Naive thymus-derived CD8-positive, alpha-beta T cell (primary cell): ENCODE measurements at regions of chr14 and their contacts with region 1.

Region 1: GRCh38 chr14:91396959-91397815 is 20.4 kb downstream of the CCDC88C start:
- DNase-seq: peak; percentile 36 to 78 (median 58)
- ATAC-seq: peak; percentile 46 to 75
- H3K4me3 Mint-ChIP-seq: peak overlapping the region; percentile 72 to 99 (median 82)
- H3K27ac Mint-ChIP-seq: peak overlapping the region; percentile 79 to 99 (median 94)
- H3K4me1 Mint-ChIP-seq: peaks cover 57 to 99% (median 97%) of the 10 kb centered on the region in 4 donors
- H3K27me3 Mint-ChIP-seq: no peaks in the 10 kb centered on the region

Region 2: GRCh38 chr14:91323671-91324605 is 73.2 kb before region 1 on chr14:
- POLR2A ChIA-PET with region 1: interaction called, 30 read pairs
- DNase-seq: peak; percentile 88 to 96 (median 93)
- ATAC-seq: peak; percentile 77 to 85
- H3K4me3 Mint-ChIP-seq: peak overlapping the region; percentile 72 to 96 (median 83)
- H3K27ac Mint-ChIP-seq: peak overlapping the region; percentile 95 to 99 (median 98)
- H3K4me1 Mint-ChIP-seq: peaks cover 50 to 89% (median 86%) of the 10 kb centered on the region in 4 donors
- H3K27me3 Mint-ChIP-seq: no peaks in the 10 kb centered on the region

Region 3: GRCh38 chr14:91332151-91332985 is 64.8 kb before region 1 on chr14:
- POLR2A ChIA-PET with region 1: interaction called, 22 read pairs
- DNase-seq: no peak
- ATAC-seq: no peak
- H3K4me3 Mint-ChIP-seq: peak overlapping the region; percentile 10 to 80 (median 66)
- H3K27ac Mint-ChIP-seq: peak overlapping the region; percentile 84 to 99 (median 97)
- H3K4me1 Mint-ChIP-seq: peaks cover 57 to 84% (median 65%) of the 10 kb centered on the region in 4 donors
- H3K27me3 Mint-ChIP-seq: no peaks in the 10 kb centered on the region

Region 4: DNA sequence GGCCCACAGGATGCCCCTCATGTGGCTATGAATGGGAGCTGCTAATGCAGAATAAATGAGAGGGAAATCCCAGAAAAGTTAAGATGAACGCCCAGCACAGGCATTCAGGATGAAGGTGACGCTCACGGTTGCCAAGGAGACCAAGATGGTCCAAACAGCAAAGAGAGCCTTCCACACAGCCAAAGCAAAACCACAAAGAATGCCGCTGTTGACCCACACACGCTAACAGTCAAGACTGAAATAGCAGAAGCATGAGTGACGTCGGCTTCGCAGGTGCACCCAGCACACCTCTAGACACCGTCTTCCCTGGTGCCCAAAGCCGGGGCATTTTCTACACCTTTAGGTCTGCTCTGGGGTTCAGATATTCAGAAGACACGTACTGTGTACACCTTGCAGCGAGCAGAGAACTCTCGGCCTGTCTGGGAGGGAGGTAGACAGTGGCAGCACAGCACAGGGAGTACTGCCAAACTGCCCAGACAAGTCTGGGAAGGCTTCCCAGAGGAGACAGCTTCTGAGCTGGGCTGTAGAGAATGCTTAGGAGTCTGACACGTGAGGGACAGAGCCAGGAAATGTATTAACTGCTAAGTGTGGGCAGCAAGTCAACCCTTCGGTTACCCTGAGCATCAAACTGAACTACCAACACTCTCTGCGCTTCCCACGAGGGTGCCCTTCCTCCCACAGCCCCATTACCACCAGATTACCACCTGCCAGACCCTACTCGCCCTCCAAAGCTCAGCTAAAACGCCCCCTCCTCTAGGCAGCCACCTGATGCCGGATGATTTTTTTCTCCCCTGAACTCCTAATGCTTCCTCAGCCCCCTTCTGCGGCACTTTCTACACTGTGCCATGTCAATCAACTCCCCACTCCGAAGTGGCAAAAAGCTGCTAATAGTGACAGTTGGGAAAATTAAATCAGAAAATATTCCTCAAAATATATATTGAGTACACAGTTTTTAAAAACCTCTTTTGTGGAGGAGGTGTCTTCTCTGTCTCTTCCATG is 29.7 kb before region 1 on chr14:
- POLR2A ChIA-PET with region 1: interaction called, 179 read pairs
- DNase-seq: peak; percentile 51 to 85 (median 74)
- ATAC-seq: peak; percentile 74 to 85
- H3K4me3 Mint-ChIP-seq: peak overlapping the region; percentile 69 to 88 (median 81)
- H3K27ac Mint-ChIP-seq: peak overlapping the region; percentile 89 to 99 (median 94)
- H3K4me1 Mint-ChIP-seq: peaks cover 45 to 97% (median 91%) of the 10 kb centered on the region in 4 donors
- H3K27me3 Mint-ChIP-seq: no peaks in the 10 kb centered on the region

Region 5: DNA sequence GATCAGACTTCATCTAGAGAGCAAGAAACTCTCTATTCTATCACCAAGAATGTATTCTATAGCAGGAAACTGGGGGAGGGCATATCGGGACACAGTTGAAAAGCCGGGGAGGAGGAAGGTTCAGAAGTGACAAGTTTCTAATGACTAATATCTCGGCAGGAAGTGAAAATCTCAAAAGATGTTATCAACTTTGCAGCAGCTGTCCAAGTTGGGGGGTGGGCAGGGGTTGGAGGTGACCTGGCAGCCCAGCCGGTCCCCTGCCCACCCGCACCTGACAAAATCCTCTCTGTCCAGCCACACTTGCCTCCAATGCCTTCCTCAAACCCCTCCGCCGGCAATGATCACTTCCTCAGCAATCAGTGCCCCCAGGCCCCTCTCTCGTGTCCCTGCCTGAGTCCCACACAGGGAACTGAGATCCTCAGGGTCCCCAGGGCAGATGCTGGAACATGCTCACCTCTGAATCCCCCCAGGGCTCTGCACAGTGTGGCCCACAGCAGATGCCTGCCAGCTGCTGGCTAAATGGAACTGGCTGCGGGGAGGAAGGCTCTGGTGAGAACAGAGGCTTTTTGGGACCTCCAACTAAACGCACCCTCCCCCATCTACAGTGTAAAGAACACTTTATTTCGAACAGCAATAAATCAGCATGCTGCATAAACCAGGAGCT is 23.5 kb before region 1 on chr14:
- POLR2A ChIA-PET with region 1: interaction called, 179 read pairs
- DNase-seq: peak in 4 of 10 donors; percentile 45 to 57 (median 52)
- ATAC-seq: peak; percentile 33 to 51
- H3K4me3 Mint-ChIP-seq: peak overlapping the region; percentile 76 to 96 (median 85)
- H3K27ac Mint-ChIP-seq: peak overlapping the region; percentile 85 to 98 (median 94)
- H3K4me1 Mint-ChIP-seq: peaks cover 67 to 99% (median 99%) of the 10 kb centered on the region in 4 donors
- H3K27me3 Mint-ChIP-seq: no peaks in the 10 kb centered on the region

Region 6: DNA sequence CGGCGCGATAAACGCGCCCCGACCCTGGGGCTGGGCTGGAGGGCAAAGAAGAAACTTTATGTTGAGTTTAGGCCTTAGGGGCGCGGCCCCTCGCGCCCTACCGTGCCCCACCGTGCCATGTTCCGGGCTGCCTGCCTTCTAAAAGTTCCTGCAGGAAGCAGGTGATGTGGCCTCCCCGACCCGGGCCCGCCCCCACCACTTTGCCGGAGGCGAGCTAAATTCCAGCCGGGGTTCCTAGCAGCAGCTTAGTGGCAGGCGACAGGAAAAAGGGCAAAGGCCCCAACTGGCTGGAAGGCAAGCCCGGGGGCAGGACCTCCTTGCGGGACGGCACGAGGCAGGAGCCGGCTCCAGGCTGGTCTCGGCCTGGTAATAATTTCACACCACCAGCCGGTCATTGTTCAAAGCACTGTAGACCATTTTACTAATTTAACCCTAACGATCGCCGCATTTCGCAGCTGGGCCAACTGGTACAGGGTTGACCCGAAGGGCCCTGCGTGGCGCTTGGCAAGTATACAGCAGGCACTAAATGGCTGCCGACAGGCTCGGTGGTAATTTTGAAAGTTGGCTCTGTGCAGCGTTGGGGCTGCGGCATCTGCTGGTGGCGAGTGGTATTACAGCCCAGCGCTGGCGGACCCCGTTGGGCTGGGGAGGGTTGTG is 21.3 kb after region 1 on chr14:
- POLR2A ChIA-PET with region 1: interaction called, 643 read pairs
- DNase-seq: peak in 9 of 10 donors; percentile 65 to 88 (median 79)
- ATAC-seq: peak; percentile 11 to 23
- H3K4me3 Mint-ChIP-seq: peak overlapping the region; percentile 78 to 98 (median 86)
- H3K27ac Mint-ChIP-seq: peak overlapping the region; percentile 84 to 98 (median 93)
- H3K4me1 Mint-ChIP-seq: peaks cover 19 to 56% (median 39%) of the 10 kb centered on the region in 4 donors
- H3K27me3 Mint-ChIP-seq: peaks cover 0 to 2% (median 0%) of the 10 kb centered on the region in 5 donors